ENCODE measurements at regions of chr4 and their contacts with region 1.

Region 1: DNA sequence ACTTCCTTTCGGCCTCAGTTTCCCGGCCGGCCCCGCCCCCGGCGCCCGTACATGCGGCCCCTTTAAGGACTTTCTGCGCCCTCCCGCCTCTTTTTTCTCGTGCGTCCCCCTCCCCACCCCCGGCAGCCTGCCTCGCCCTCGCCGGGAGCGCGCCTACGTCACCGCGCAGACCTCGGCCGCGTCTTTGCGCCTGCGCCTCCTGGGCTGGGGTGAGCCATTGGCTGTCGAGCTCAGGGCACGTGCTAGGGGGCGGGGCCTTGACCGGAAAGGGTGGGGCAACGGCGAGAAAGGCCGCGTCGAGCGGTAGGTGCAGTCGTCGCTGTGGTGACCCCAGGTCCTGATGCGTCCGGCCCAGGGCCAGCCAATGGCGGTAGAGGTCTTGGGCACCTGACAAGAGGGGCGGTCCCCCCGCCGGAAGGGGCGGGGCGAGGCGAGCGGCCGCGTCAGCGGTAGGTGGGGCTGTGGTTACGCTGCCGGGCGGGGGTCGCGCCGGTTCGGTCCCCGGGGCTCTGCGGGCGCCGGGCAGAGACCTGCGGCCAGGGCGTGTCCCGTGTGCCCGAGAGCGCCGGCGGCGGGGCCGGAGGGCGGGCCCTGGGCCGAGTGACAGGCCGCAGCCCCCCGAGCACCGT is at the start of gene UVSSA:
- DNase-seq: peak; percentile 100
- H3K4me3 Mint-ChIP-seq: peak within 1 kb of the TSS; percentile 80
- H3K27ac Mint-ChIP-seq: peak within 1 kb of the TSS; percentile 78
- H3K4me1 Mint-ChIP-seq: peaks cover 46% of the 10 kb centered on the region
- H3K27me3 Mint-ChIP-seq: no peaks in the 10 kb centered on the region
- total RNA-seq, gene UVSSA: 20.0 to 24.3 TPM

Region 2: GRCh38 chr4:674172-675035 is 672.5 kb before region 1 on chr4 and contains the starts of genes ATP5ME and MYL5:
- CTCF ChIA-PET with region 1: no interaction called
- intact Hi-C with region 1: loop called (anchors 1 kb)
- DNase-seq: peak; percentile 97
- H3K4me3 Mint-ChIP-seq: peak within 1 kb of the TSS; percentile 84
- H3K27ac Mint-ChIP-seq: peak within 1 kb of the TSS; percentile 84
- H3K4me1 Mint-ChIP-seq: peaks cover 15% of the 10 kb centered on the region
- H3K27me3 Mint-ChIP-seq: no peaks in the 10 kb centered on the region
- total RNA-seq, gene ATP5ME: 254 to 257 TPM
- total RNA-seq, gene MYL5: 12.0 to 12.9 TPM

Region 3: DNA sequence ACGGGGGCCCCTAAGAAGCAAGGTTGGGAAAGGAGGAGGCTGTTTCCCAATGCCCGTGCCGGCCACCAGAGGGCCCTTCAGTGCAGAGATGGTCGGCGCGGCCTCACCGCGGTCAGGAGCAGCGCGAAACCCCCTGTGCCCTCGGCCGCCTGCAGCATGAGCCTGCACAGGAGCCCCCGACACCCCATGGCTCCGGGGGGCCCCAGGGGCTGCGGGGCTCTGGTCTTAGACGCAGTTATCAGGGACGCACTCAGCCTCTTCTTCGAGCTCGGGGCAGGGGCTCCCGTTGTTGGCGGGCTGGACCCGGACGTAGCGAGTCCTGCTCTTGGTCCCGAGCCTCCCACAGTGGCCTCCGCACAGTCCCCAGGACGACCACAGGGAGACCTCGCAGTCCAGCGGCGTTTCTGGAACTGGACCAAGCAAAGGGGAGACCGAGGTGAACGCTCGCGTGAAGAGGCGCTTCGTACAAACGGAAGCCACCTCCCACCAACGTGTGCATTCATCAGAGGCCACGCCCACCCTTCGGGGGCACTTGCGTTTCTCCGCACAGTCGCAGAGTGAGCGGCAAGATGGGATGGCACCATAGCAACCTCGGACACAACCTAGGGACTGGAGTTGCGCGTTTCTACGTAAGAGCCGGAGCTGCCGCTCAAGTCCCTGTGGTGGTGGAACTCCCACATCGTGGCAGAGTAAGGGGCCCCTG is 179.5 kb before region 1 on chr4:
- CTCF ChIA-PET with region 1: interaction called, 3 read pairs
- intact Hi-C with region 1: loop called (anchors 1 kb)
- DNase-seq: peak; percentile 93
- H3K4me3 Mint-ChIP-seq: peak overlapping the region; percentile 74
- H3K27ac Mint-ChIP-seq: no peak overlapping the region
- H3K4me1 Mint-ChIP-seq: peaks cover 18% of the 10 kb centered on the region
- H3K27me3 Mint-ChIP-seq: peaks cover 15% of the 10 kb centered on the region

Region 4: DNA sequence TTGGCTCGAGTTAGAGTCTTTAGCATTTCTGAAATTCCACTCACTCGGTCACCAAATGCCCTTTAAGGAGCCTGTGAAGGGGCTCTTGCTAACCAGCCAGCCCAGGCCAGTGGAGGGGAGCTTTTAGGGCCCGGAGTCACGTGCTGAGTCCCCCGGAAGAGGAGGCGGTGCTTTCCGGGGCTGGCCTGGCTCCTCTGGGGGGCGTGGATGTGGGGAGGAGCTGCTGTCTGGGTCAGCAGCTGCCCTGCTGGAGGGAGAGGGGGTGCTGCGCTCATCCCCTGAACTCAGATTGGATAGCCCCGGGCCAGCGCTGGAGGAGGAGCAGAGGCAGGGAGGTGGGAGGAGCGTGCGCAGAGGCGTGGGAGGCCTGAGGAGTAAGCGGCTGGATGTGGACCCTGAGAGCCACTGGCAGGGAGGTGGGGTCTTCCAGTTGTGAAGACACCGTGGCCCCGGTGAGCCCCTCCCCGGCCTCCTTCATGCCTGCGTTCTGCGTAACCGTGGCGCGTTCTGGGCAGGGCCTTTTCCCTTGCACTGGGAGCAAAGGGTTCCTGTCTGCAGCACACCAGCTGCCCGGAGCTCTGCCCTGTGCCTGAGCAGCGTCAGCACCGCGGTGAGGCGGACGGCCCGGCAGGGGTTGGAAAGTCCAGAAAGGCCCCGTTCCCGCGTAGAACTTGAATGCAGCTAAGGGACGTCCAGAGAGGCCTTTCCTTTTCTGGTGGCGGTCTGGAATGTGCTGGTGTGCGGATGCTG is 37.5 kb before region 1 on chr4:
- CTCF ChIA-PET with region 1: interaction called, 5 read pairs
- intact Hi-C with region 1: loop called (anchors 5 kb)
- DNase-seq: peak; percentile 70
- H3K4me3 Mint-ChIP-seq: peak overlapping the region; percentile 67
- H3K27ac Mint-ChIP-seq: peak overlapping the region; percentile 72
- H3K4me1 Mint-ChIP-seq: peaks cover 67% of the 10 kb centered on the region
- H3K27me3 Mint-ChIP-seq: no peaks in the 10 kb centered on the region

Region 5: DNA sequence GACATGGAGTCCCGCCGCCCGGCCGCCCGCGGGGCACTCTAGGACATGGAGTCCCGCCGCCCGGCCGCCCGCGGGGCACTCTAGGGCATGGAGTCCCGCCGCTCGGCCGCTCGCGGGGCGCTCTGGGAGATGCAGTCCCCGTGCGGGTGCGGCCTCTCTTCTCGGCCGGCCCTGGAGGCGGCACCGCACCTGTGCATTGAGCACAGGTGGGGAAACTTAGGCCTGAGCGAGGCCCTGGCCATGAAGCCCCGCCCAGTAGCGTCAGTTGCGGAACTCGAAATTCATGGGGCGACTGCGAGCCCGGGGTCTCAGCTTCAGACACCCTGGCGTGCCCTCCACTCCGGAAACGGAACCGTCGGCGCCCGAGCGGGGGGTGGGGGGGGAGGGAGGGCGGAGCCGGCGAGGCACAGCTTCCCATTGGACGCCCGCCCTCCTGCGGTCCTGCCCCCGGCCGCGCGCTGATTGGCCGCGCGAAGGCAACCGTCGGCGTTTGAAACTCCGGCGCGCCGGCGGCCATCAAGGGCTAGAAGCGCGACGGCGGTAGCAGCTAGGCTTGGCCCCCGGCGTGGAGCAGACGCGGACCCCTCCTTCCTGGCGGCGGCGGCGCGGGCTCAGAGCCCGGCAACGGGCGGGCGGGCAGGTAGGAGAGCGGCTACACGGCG is 374.2 kb after region 1 on chr4 and contains the starts of genes TACC3 and TMEM129:
- CTCF ChIA-PET with region 1: no interaction called
- intact Hi-C with region 1: loop called (anchors 2 kb)
- DNase-seq: peak; percentile 96
- H3K4me3 Mint-ChIP-seq: peak within 1 kb of the TSS; percentile 94
- H3K27ac Mint-ChIP-seq: peak within 1 kb of the TSS; percentile 98
- H3K4me1 Mint-ChIP-seq: peaks cover 53% of the 10 kb centered on the region
- H3K27me3 Mint-ChIP-seq: no peaks in the 10 kb centered on the region
- total RNA-seq, gene TACC3: 246 to 264 TPM
- total RNA-seq, gene TMEM129: 19.0 to 19.8 TPM